ENCODE measurements at regions of chr17 and their contacts with region 1.

Region 1: DNA sequence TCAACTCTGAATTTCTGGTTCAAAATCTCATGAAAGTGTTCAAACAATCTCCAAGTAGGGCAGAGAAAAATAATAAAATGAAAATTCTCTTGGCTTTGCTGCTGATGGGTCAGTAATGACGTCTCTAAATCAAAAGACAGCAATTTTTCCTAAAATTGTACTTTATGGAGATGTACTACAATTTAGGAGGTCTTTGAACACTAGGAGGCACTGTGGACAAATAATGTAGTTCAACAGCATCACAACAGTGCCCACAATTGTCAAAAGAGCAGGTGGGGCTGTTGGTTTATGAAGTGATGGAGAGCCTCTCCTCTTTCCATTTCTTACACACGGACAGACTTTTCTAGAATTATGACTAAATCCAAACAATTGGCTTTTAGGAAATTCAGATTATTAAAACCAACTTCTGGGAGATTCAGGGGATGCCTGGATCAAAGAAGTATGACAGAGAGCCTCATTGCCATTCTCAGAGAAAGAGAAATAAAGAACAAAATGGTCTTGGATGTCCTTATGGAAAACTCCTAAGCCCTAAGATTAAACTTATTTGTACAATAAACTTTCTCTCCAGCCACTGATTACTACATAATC is 23.8 kb downstream of the EZH1 start:
- DNase-seq: no peak
- H3K4me3 ChIP-seq: no peak overlapping the region
- H3K27ac ChIP-seq: no peak overlapping the region
- H3K4me1 ChIP-seq: no peaks in the 10 kb centered on the region
- H3K27me3 ChIP-seq: no peaks in the 10 kb centered on the region
- CTCF ChIP-seq: peak; percentile 52 to 68 (median 61)
- EP300 ChIP-seq: no peak
- POLR2A ChIP-seq: no peak

Region 2: GRCh38 chr17:42760652-42761581 is 39.8 kb after region 1 on chr17 and contains the start of gene RAMP2:
- intact Hi-C with region 1: loop called (anchors 1 kb)
- DNase-seq: peak; percentile 68
- H3K4me3 ChIP-seq: peak within 1 kb of the TSS; percentile 14 to 64 (median 54)
- H3K27ac ChIP-seq: peak within 1 kb of the TSS; percentile 34 to 77 (median 54)
- H3K4me1 ChIP-seq: peaks cover 0 to 20% (median 17%) of the 10 kb centered on the region in 4 donors
- H3K27me3 ChIP-seq: peaks cover 4 to 29% (median 20%) of the 10 kb centered on the region in 3 donors
- CTCF ChIP-seq: no peak
- EP300 ChIP-seq: no peak
- POLR2A ChIP-seq: no peak
- total RNA-seq, gene RAMP2: 11.2 to 26.6 (median 18.4) TPM

Region 3: DNA sequence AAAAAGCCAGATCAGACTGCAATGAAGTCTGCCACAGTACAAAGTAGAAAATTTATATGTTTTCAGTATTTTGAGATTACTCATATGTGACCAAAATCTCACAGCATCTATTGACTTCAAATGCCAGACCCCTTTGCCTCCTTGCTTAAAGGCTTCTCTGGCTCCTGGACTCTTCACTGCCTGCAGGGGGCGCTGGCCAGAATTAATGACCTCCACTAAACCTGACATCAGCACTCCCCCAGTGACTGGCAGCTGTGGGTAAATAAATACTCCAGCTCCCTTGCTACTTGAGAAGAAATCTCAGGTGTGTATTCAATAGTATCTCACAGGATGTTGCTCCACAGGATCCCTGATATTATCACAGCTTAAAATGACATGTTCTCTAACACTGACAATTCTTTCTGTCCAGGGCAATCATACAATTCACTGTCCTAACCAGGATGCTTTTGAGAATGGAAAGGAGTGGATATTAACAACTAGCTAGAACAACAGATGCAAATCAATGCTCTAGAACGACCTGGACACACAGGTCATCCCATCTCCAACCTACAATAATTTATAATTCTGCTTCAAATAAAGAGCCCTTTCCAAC is 99.0 kb after region 1 on chr17:
- intact Hi-C with region 1: loop called (anchors 5 kb)
- DNase-seq: no peak
- H3K4me3 ChIP-seq: no peak overlapping the region
- H3K27ac ChIP-seq: no peak overlapping the region
- H3K4me1 ChIP-seq: peaks cover 0 to 22% (median 18%) of the 10 kb centered on the region in 4 donors
- H3K27me3 ChIP-seq: no peaks in the 10 kb centered on the region
- CTCF ChIP-seq: peak in 3 of 4 experiments; percentile 17 to 56 (median 27)
- EP300 ChIP-seq: no peak
- POLR2A ChIP-seq: no peak